Transverse colon (tissue), 4 donors: ENCODE measurements at regions of chr19 and their contacts with region 1.

Region 1: GRCh38 chr19:1227655-1228054 is 10.2 kb downstream of the CBARP start:
- DNase-seq: no peak
- H3K4me3 ChIP-seq: no peak overlapping the region
- H3K27ac ChIP-seq: no peak overlapping the region
- H3K4me1 ChIP-seq: peaks cover 2 to 11% (median 7%) of the 10 kb centered on the region in 4 donors
- H3K27me3 ChIP-seq: no peaks in the 10 kb centered on the region
- CTCF ChIP-seq: no peak
- EP300 ChIP-seq: no peak
- POLR2A ChIP-seq: no peak

Region 2: DNA sequence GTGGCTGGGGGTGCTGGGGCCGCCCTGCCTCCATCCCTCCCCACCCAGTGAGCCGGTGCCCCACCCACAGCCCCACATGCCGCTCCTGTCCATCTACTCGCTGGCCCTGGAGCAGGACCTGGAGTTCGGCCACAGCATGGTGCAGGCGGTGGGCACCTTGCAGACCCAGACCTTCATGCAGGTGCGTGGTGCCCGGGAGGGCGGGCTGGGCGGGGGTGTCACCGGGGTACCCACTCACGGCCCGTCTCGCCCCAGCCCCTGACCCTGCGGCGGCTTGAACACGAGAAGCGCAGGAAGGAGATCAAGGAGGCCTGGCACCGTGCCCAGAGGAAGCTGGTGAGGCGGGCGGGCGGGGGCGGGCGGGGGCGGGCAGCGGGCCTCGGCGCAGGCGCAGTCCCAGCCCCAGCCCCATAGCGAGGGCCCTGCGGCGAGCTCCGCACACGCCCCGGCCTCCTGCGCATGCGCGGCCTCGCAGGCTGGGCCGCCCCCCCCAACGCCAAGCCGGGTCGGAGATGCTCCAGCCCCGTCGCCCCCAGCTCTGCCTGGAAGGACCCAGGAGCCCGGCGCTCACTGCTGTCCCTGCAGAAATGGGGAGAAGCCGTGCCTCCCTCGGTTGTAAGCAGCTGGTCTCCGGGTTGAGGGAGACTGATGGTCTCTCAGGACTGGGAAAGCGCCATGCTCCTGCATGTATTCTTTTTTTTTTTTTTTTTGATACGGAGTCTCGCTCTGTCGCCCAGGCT is 152.9 kb before region 1 on chr19:
- in situ Hi-C with region 1: no loop called
- intact Hi-C with region 1: no loop called
- DNase-seq: peak; percentile 94
- H3K4me3 ChIP-seq: peak overlapping the region in 3 of 4 donors; percentile 2 to 41 (median 33)
- H3K27ac ChIP-seq: peak overlapping the region; percentile 47 to 74 (median 67)
- H3K4me1 ChIP-seq: peaks cover under 1 to 62% (median 30%) of the 10 kb centered on the region in 4 donors
- H3K27me3 ChIP-seq: peaks cover 35% of the 10 kb centered on the region
- CTCF ChIP-seq: no peak
- EP300 ChIP-seq: no peak
- POLR2A ChIP-seq: no peak

Region 3: GRCh38 chr19:1113033-1113985 is 114.3 kb before region 1 on chr19:
- in situ Hi-C with region 1: no loop called
- intact Hi-C with region 1: no loop called
- DNase-seq: peak; percentile 98
- H3K4me3 ChIP-seq: peak overlapping the region in 2 of 4 donors; percentile 5 to 18
- H3K27ac ChIP-seq: peak overlapping the region; percentile 78 to 82 (median 80)
- H3K4me1 ChIP-seq: peaks cover 15 to 28% (median 26%) of the 10 kb centered on the region in 4 donors
- H3K27me3 ChIP-seq: no peaks in the 10 kb centered on the region
- CTCF ChIP-seq: peak; percentile 90 to 97 (median 93)
- EP300 ChIP-seq: no peak
- POLR2A ChIP-seq: no peak

Region 4: DNA sequence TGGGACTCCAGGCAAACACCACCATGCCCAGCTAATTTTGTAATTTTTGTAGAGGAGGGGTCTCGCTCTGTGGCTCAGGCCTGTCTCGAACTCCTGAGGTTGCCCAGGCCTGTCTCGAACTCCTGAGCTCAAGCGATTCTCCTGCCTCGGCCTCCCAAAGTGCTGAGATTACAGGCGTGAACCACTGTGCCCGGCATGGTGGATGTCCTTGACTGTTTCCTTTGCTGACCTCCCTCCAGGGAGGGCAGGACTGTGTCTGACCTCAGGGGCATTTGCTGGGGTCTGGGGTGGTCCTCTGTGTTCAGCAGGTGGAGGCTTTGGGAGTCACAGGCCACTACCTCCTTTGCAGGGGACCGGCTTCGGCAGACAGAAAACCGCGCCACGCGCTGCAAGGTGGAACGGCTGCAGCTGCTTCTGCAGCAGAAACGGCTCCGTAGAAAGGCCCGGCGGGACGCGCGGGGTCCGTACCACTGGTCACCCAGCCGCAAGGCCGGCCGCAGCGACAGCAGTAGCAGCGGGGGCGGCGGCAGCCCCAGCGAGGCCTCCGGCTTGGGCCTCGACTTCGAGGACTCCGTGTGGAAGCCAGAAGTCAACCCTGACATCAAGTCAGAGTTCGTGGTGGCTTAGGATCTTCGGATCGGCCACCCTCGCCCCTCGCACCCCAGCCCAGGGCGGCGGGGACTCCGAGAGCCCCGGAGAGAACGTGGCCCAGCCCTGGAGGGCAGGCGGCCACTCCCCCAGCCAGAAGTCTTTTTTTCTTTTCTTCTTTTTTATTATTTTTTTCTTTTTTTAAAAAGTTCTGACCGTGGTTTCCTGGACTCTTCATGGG is 29.2 kb after region 1 on chr19:
- in situ Hi-C with region 1: no loop called
- intact Hi-C with region 1: loop called (anchors 1 kb)
- DNase-seq: peak; percentile 16
- H3K4me3 ChIP-seq: no peak overlapping the region
- H3K27ac ChIP-seq: peak overlapping the region; percentile 98 to 100 (median 98)
- H3K4me1 ChIP-seq: peaks cover 53 to 93% (median 86%) of the 10 kb centered on the region in 4 donors
- H3K27me3 ChIP-seq: no peaks in the 10 kb centered on the region
- CTCF ChIP-seq: no peak
- EP300 ChIP-seq: no peak
- POLR2A ChIP-seq: peak; percentile 4

Region 5: GRCh38 chr19:1373534-1374249 is 146.0 kb after region 1 on chr19:
- in situ Hi-C with region 1: no loop called
- intact Hi-C with region 1: no loop called
- DNase-seq: no peak
- H3K4me3 ChIP-seq: no peak overlapping the region
- H3K27ac ChIP-seq: peak overlapping the region; percentile 49 to 61 (median 54)
- H3K4me1 ChIP-seq: peaks cover 0 to 10% (median 0%) of the 10 kb centered on the region in 4 donors
- H3K27me3 ChIP-seq: no peaks in the 10 kb centered on the region
- CTCF ChIP-seq: no peak
- EP300 ChIP-seq: no peak
- POLR2A ChIP-seq: no peak